ENCODE measurements at regions of chr1 and their contacts with region 1.

Region 1: DNA sequence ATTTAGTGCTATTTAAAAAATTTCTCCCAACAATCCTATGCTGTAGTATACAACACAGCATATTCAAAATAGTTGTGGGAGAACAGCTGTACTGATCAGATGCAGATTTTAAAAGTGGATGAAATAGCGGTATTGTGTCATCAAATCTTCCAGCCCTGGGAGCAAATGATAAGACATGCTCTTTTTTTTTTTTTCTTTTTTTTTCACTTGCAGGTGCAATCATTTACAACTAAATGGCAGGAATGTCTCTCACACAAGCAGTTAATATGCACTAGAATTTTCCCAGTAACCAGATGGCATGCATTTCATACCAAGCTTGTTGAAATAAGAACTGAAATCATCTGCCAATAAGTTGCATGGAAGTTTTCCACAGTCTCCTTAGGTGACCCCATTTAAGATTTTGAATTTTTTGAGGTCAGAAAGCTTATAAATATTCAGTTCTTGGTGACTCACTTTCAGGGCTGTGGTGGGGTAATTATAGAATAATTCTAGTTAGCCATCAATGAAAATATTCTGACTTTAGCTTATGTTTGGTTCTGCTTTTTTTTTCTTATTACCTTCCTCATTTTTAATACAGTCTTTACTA is 623.9 kb upstream of the NR5A2 start:
- DNase-seq: peak; percentile 95
- H3K4me3 ChIP-seq: no peak overlapping the region
- H3K27me3 ChIP-seq: no peaks in the 10 kb centered on the region
- CTCF ChIP-seq: no peak

Region 2: GRCh38 chr1:199422198-199422597 is 18.6 kb after region 1 on chr1:
- CTCF ChIA-PET with region 1: interaction called, 11 read pairs
- POLR2A ChIA-PET with region 1: interaction called, 6 read pairs
- DNase-seq: peak; percentile 3
- H3K4me3 ChIP-seq: no peak overlapping the region
- H3K27me3 ChIP-seq: no peaks in the 10 kb centered on the region
- CTCF ChIP-seq: peak; percentile 65

Region 3: GRCh38 chr1:199691540-199691939 is 287.9 kb after region 1 on chr1:
- CTCF ChIA-PET with region 1: no interaction called
- POLR2A ChIA-PET with region 1: no interaction called
- DNase-seq: peak; percentile 52
- H3K4me3 ChIP-seq: no peak overlapping the region
- H3K27me3 ChIP-seq: peaks cover 3% of the 10 kb centered on the region; the same call in 1 of the 2 replicates
- CTCF ChIP-seq: no peak

Measured in BJ (cell line).